Caco-2 (cell line): ENCODE measurements at regions of chr15 and their contacts with region 1.

Region 1: DNA sequence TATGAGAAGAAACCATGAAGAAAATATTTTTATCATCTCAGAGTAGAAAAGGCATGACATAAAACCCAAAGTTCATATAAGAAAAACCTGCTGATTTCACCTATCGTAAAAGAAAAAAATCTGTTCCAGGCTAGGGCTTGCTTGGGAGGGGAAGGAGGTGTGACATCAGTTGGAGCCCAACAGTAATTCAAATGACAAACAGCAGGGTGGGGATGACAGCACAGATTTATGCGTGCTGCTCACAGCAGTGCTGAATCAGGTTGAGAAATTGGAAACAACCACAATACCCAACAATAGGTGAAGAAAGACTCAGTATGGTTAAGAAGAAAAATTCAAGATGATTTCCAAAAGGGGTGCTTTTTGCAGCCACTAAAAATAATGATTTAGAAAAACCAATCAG is 172.4 kb downstream of the PDE8A start:
- DNase-seq: no peak
- H3K4me3 ChIP-seq: no peak overlapping the region
- H3K4me3 Mint-ChIP-seq: no peak overlapping the region
- H3K27ac Mint-ChIP-seq: no peak overlapping the region
- H3K4me1 ChIP-seq: peaks cover 4% of the 10 kb centered on the region; the same call in 1 of the 2 replicates
- H3K4me1 Mint-ChIP-seq: no peaks in the 10 kb centered on the region
- H3K27me3 ChIP-seq: no peaks in the 10 kb centered on the region
- H3K27me3 Mint-ChIP-seq: peaks cover 6% of the 10 kb centered on the region
- CTCF ChIP-seq: no peak

Region 2: GRCh38 chr15:84057714-84058331 is 1096.2 kb before region 1 on chr15:
- CTCF ChIA-PET with region 1: no interaction called
- POLR2A ChIA-PET with region 1: no interaction called
- intact Hi-C with region 1: loop called (anchors 10 kb)
- DNase-seq: no peak
- H3K4me3 ChIP-seq: no peak overlapping the region
- H3K4me3 Mint-ChIP-seq: no peak overlapping the region
- H3K27ac Mint-ChIP-seq: no peak overlapping the region
- H3K4me1 ChIP-seq: no peaks in the 10 kb centered on the region
- H3K4me1 Mint-ChIP-seq: no peaks in the 10 kb centered on the region
- H3K27me3 ChIP-seq: no peaks in the 10 kb centered on the region
- H3K27me3 Mint-ChIP-seq: peaks cover 3% of the 10 kb centered on the region
- CTCF ChIP-seq: no peak

Region 3: GRCh38 chr15:85168642-85169173 is 14.6 kb after region 1 on chr15:
- CTCF ChIA-PET with region 1: no interaction called
- POLR2A ChIA-PET with region 1: no interaction called
- intact Hi-C with region 1: loop called (anchors 2 kb)
- DNase-seq: peak; percentile 39 to 51
- H3K4me3 ChIP-seq: peak overlapping the region; percentile 20
- H3K4me3 Mint-ChIP-seq: peak overlapping the region; percentile 40
- H3K27ac Mint-ChIP-seq: no peak overlapping the region
- H3K4me1 ChIP-seq: 0 out of 2 replicates have a peak, but pooled peaks cover 4% of the 10 kb centered on the region
- H3K4me1 Mint-ChIP-seq: peaks cover 11% of the 10 kb centered on the region
- H3K27me3 ChIP-seq: no peaks in the 10 kb centered on the region
- H3K27me3 Mint-ChIP-seq: no peaks in the 10 kb centered on the region
- CTCF ChIP-seq: peak; percentile 16 to 40